ENCODE measurements at regions of chr16 and their contacts with region 1.

Region 1: GRCh38 chr16:88303890-88304819 is 78.6 kb upstream of the ZNF469 start:
- DNase-seq: peak; percentile 49 to 73
- H3K4me3 ChIP-seq: no peak overlapping the region
- H3K27ac ChIP-seq: no peak overlapping the region
- H3K4me1 ChIP-seq: peaks cover 21% of the 10 kb centered on the region
- H3K27me3 ChIP-seq: no peaks in the 10 kb centered on the region
- CTCF ChIP-seq: no peak

Region 2: DNA sequence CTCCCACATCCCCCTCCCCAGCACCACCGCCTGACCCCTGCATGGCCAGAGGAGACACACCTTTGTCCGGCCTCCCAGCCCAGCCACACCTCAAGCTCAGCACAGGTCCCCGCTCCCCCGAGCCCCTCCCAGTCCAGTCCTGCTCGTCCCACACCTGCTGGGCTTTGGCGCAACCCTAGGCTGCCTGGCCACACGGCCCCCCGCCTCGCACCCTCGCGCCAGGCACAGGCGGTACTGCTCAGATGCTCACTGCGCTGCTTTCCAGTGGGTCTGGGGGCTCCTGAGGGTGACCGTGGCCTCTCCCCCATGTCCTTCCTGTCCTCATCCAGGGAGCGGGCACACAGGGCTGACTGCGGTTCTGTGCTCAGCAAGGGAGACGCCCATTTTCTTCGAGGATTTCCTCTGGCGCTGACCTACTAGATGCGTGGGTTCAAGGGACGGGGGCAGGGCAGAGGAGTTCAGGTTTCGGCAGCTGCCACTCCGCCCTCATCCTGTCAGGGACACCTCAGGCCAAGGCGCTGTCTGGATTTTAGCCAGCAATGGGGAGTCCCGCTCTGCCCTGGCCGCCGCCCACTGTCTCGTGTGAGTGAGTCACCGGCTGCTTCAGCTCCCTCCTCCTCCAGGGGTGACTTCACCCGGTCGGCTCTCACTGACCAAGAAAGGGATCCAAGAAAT is 39.4 kb before region 1 on chr16:
- CTCF ChIA-PET with region 1: no interaction called
- POLR2A ChIA-PET with region 1: no interaction called
- intact Hi-C with region 1: loop called (anchors 1 kb)
- DNase-seq: peak; percentile 93 to 99
- H3K4me3 ChIP-seq: peak overlapping the region; percentile 45; the same call in 1 of the 2 replicates
- H3K27ac ChIP-seq: peak overlapping the region; percentile 58
- H3K4me1 ChIP-seq: peaks cover 16% of the 10 kb centered on the region; the same call in 1 of the 2 replicates
- H3K27me3 ChIP-seq: no peaks in the 10 kb centered on the region
- CTCF ChIP-seq: no peak

Region 3: GRCh38 chr16:88578446-88579313 is 274.5 kb after region 1 on chr16:
- CTCF ChIA-PET with region 1: no interaction called
- POLR2A ChIA-PET with region 1: no interaction called
- intact Hi-C with region 1: no loop called
- DNase-seq: no peak
- H3K4me3 ChIP-seq: no peak overlapping the region
- H3K27ac ChIP-seq: no peak overlapping the region
- H3K4me1 ChIP-seq: no peaks in the 10 kb centered on the region
- H3K27me3 ChIP-seq: no peaks in the 10 kb centered on the region
- CTCF ChIP-seq: no peak

Measured in PC-9 (cell line).